Dendritic cell treated with granulocyte-macrophage colony-stimulating factor and Interleukin-4, amounts not matched to agents 40 ng/mL and 50 ng/mL, for 4 days (primary cell): ENCODE measurements at regions of chr2 and their contacts with region 1.

Region 1: GRCh38 chr2:172293956-172294355 is 133.4 kb upstream of the ITGA6 start:
- H3K4me3 Mint-ChIP-seq: no peak overlapping the region
- H3K27ac Mint-ChIP-seq: no peak overlapping the region
- H3K4me1 Mint-ChIP-seq: peaks cover 24% of the 10 kb centered on the region
- H3K27me3 Mint-ChIP-seq: peaks cover 19% of the 10 kb centered on the region

Region 2: DNA sequence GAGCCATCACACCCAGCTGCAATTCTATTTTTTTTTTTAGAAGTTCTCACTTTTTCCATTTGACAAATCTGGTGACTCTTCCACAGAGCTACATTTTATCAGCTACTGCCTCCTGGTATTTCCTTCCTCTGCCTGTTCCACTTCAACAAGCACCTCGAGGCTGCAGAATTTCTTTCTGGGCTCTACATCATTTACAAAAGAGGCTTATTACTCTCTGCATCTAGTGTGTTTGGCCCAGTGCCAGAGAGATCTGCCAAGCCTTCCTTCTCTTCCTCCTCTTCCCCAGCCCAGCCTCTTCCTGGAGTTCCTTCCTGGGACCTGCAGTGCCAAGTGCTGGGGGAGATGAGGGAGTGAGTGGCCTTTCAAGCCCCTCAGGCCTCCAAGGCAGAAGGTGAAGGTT is 13.8 kb after region 1 on chr2:
- intact Hi-C with region 1: no loop called
- H3K4me3 Mint-ChIP-seq: no peak overlapping the region
- H3K27ac Mint-ChIP-seq: no peak overlapping the region
- H3K4me1 Mint-ChIP-seq: peaks cover 11% of the 10 kb centered on the region
- H3K27me3 Mint-ChIP-seq: no peaks in the 10 kb centered on the region

Region 3: GRCh38 chr2:172380436-172381274 is 86.7 kb after region 1 on chr2:
- intact Hi-C with region 1: loop called (anchors 10 kb)
- H3K4me3 Mint-ChIP-seq: peak overlapping the region; percentile 52
- H3K27ac Mint-ChIP-seq: peak overlapping the region; percentile 61
- H3K4me1 Mint-ChIP-seq: peaks cover 30% of the 10 kb centered on the region
- H3K27me3 Mint-ChIP-seq: peaks cover 8% of the 10 kb centered on the region